T-cell (primary cell): ENCODE measurements at regions of chr11 and their contacts with region 1.

Region 1: GRCh38 chr11:105443623-105444022 is 166.2 kb upstream of the GRIA4 start:
- DNase-seq: no peak
- ATAC-seq: no peak
- H3K4me3 ChIP-seq: no peak overlapping the region
- H3K4me3 Mint-ChIP-seq: no peak overlapping the region
- H3K27ac ChIP-seq: no peak overlapping the region
- H3K27ac Mint-ChIP-seq: no peak overlapping the region
- H3K4me1 ChIP-seq: no peaks in the 10 kb centered on the region
- H3K4me1 Mint-ChIP-seq: no peaks in the 10 kb centered on the region
- H3K27me3 ChIP-seq: peaks cover 0 to 6% of the 10 kb centered on the region in 2 experiments
- H3K27me3 Mint-ChIP-seq: peaks cover 0 to 2% of the 10 kb centered on the region in 2 donors

Region 2: GRCh38 chr11:105372206-105372605 is 71.4 kb before region 1 on chr11:
- CTCF ChIA-PET with region 1: no interaction called
- POLR2A ChIA-PET with region 1: no interaction called
- DNase-seq: no peak
- ATAC-seq: no peak
- H3K4me3 ChIP-seq: no peak overlapping the region
- H3K4me3 Mint-ChIP-seq: no peak overlapping the region
- H3K27ac ChIP-seq: no peak overlapping the region
- H3K27ac Mint-ChIP-seq: no peak overlapping the region
- H3K4me1 ChIP-seq: no peaks in the 10 kb centered on the region
- H3K4me1 Mint-ChIP-seq: no peaks in the 10 kb centered on the region
- H3K27me3 ChIP-seq: no peaks in the 10 kb centered on the region
- H3K27me3 Mint-ChIP-seq: peaks cover 0 to 3% of the 10 kb centered on the region in 2 donors

Region 3: DNA sequence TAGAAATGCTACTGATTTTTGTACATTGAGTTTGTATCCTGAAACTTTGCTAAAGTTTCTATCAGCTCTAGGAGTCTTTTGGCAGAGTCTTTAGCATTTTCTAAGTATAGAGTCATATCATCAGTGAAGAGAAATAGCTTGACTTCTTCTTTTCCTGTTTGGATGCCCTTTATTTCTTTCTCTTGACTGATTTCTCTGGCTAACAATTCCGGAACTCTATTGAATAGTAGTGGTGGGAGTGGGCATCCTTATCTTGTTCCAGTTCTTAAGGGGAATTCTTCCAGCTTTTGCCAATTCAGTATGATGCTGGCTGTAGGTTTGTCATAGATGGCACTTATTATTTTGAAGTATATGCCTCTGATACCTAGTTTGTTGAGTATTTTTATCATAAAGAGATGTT is 831.5 kb after region 1 on chr11:
- CTCF ChIA-PET with region 1: no interaction called
- POLR2A ChIA-PET with region 1: interaction called in 1 of 2 experiments, 15 read pairs
- DNase-seq: no peak
- ATAC-seq: no peak
- H3K4me3 ChIP-seq: no peak overlapping the region
- H3K4me3 Mint-ChIP-seq: no peak overlapping the region
- H3K27ac ChIP-seq: no peak overlapping the region
- H3K27ac Mint-ChIP-seq: no peak overlapping the region
- H3K4me1 ChIP-seq: no peaks in the 10 kb centered on the region
- H3K4me1 Mint-ChIP-seq: no peaks in the 10 kb centered on the region
- H3K27me3 ChIP-seq: no peaks in the 10 kb centered on the region
- H3K27me3 Mint-ChIP-seq: no peaks in the 10 kb centered on the region